ENCODE measurements at regions of chrX and their contacts with region 1.

Region 1: GRCh38 chrX:153032397-153033118 is 23.7 kb upstream of the PNMA3 start:
- DNase-seq: no peak
- ATAC-seq: peak; percentile 92
- H3K4me3 ChIP-seq: peak overlapping the region; percentile 37 to 46
- H3K27ac ChIP-seq: peak overlapping the region; percentile 11
- H3K4me1 ChIP-seq: no peaks in the 10 kb centered on the region
- H3K27me3 ChIP-seq: no peaks in the 10 kb centered on the region
- CTCF ChIP-seq: peak; percentile 96

Region 2: DNA sequence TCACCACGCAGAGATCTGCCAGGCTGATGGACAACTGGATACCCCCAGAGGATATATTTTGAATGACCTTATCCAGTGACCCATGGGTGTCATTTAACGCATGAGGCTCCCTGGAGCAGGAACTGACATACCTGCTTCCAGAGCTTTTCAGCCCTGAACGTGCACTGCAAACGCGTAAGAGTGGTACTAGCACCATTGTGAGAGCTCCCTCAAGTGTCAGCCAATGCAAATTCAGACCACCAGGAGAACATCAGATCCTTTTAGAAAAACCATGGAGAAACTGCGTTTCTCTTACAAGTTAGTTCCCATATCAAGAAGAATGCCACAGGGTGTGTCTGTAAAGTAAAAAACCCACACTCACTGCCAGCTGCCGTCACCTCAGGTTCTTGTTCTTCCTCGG is 406.0 kb after region 1 on chrX:
- CTCF ChIA-PET with region 1: interaction called, 3 read pairs
- POLR2A ChIA-PET with region 1: no interaction called
- in situ Hi-C with region 1: no loop called
- intact Hi-C with region 1: loop called (anchors 10 kb)
- DNase-seq: no peak
- ATAC-seq: peak; percentile 75
- H3K4me3 ChIP-seq: no peak overlapping the region
- H3K27ac ChIP-seq: no peak overlapping the region
- H3K4me1 ChIP-seq: no peaks in the 10 kb centered on the region
- H3K27me3 ChIP-seq: no peaks in the 10 kb centered on the region
- CTCF ChIP-seq: peak; percentile 67

Region 3: DNA sequence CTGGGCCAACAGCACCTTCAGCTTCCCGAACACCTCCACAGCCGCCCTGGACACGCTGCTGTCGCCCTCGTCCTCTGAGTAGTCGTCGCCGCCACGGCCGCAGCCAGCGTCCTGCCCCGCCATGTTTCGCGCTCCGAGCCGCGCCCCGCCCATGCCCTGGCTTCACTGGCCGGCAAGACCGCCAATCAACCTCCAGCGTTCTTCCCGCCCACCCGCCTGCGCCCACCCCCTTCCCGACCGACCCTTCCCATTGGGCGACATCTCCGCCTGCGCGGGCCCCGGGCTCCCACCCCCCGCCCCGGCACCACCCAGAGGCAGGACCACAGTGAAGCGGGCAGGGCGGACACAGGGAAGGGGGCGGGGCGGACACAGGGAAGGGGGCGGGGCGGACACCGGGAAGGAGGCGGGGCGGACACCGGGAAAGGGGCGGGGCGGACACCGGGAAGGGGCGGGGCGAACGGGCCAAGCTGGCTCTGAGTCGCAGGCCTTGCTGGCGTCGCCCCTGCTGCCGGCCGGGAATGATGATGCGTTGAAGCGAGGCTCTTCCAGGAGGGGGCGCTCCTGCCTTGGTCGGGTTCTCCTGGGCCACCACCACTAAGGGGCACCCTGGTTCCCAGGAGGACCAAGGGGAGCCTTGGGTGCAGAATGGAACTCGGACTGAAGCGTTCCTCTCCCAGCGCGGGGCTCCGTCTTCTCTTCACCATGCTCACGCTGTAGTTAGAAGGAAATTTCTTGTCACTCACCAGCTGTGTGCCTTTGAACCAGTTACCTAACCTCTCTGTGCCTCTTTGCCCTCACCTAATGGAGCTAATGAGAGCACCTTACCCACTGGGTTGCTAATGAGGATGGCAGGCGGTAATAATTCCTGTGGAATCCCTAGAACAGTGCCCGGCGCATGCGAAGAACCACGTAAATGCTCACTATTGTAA is 438.1 kb after region 1 on chrX and contains the start of gene HAUS7:
- CTCF ChIA-PET with region 1: interaction called, 10 read pairs
- POLR2A ChIA-PET with region 1: no interaction called
- in situ Hi-C with region 1: no loop called
- intact Hi-C with region 1: no loop called
- DNase-seq: peak; percentile 43
- ATAC-seq: peak; percentile 91
- H3K4me3 ChIP-seq: peak within 1 kb of the TSS; percentile 75 to 95
- H3K27ac ChIP-seq: peak within 1 kb of the TSS; percentile 81
- H3K4me1 ChIP-seq: no peaks in the 10 kb centered on the region
- H3K27me3 ChIP-seq: no peaks in the 10 kb centered on the region
- CTCF ChIP-seq: no peak
- total RNA-seq, gene HAUS7: 59.9 TPM

Region 4: GRCh38 chrX:153507484-153508178 is 475.1 kb after region 1 on chrX:
- CTCF ChIA-PET with region 1: no interaction called
- POLR2A ChIA-PET with region 1: interaction called, 4 read pairs
- in situ Hi-C with region 1: no loop called
- intact Hi-C with region 1: loop called (anchors 5 kb)
- DNase-seq: peak; percentile 12
- ATAC-seq: peak; percentile 96
- H3K4me3 ChIP-seq: peak overlapping the region in 1 of 2 experiments; percentile 17; a peak in 2 of 4 replicates
- H3K27ac ChIP-seq: 0 out of 2 replicates have a peak overlapping the region, but pooled peaks have one; percentile 7
- H3K4me1 ChIP-seq: no peaks in the 10 kb centered on the region
- H3K27me3 ChIP-seq: no peaks in the 10 kb centered on the region
- CTCF ChIP-seq: no peak